ENCODE measurements at regions of chr21 and their contacts with region 1.

Region 1: DNA sequence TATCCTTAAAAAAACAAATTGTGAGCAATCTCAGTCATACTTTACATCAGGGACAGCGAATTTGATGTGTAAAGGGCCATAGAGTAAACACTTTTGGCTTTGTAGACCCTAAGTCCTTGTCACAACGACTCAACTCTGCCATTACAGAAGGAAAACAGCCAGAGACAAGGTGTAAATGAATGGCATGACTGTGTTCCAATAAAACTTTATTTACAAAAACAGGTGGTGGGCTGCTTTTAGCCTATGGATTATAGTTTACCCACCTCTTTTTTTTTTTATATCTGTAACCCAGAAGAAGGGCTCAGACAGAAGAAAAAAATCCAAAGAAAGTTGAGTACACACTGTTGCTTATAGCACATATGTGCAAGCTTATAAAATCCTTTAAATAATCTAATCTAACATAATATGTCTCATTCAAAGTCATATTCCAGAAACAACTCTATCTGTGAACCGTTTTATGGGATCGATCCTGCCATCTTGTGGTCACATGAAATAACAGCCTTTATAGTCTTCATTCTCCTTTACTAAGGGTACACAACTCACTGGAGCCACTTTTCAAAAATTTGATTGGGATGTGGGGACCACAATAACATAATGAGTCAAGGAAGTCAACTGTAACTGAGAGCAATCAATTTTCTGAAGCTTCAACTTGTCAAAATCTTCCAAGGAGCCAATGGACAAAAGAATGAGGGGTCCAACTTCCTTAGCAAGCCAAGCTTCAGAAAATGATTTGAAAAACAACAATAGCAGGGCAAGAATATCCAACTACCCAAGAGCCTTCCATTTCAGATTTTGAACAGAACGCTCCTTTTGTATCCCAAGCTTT is 142.2 kb upstream of the KRTAP19-8 start:
- DNase-seq: peak in 6 of 9 donors; percentile 33 to 65 (median 50)
- ATAC-seq: peak; percentile 30
- H3K4me3 ChIP-seq: peak overlapping the region; percentile 46
- H3K4me3 Mint-ChIP-seq: peak overlapping the region; percentile 82 to 100 (median 87)
- H3K27ac ChIP-seq: peak overlapping the region; percentile 79
- H3K27ac Mint-ChIP-seq: peak overlapping the region; percentile 96 to 100 (median 99)
- H3K4me1 ChIP-seq: peaks cover 12 to 73% of the 10 kb centered on the region in 2 donors
- H3K4me1 Mint-ChIP-seq: peaks cover 44 to 92% (median 72%) of the 10 kb centered on the region in 7 donors
- H3K27me3 ChIP-seq: no peaks in the 10 kb centered on the region
- H3K27me3 Mint-ChIP-seq: no peaks in the 10 kb centered on the region

Region 2: DNA sequence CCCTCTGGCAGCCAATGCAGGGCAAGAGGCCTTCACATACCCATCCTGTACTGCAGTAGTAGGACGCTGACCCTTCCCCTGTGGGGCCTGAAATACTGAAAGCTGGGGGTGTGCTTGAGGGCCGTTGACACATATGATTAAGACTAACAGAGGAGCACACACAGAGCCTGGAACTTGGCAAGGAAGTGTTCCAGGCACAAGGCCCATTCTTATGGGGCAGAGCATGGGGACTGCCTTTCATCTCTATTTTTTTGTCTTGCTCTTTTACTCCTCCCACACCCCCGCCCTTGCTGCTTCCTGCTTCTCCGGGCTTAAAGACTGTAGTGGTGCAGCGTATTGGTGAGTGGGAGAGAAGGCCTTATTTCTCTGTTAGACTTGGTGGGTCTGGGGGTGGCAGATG is 1744.3 kb before region 1 on chr21:
- CTCF ChIA-PET with region 1: no interaction called
- POLR2A ChIA-PET with region 1: no interaction called
- intact Hi-C with region 1: loop called in 1 of 2 experiments (anchors 10 kb)
- DNase-seq: peak in 8 of 9 donors; percentile 28 to 69 (median 54)
- ATAC-seq: peak; percentile 90
- H3K4me3 ChIP-seq: peak overlapping the region; percentile 41
- H3K4me3 Mint-ChIP-seq: peak overlapping the region; percentile 80 to 91 (median 88)
- H3K27ac ChIP-seq: peak overlapping the region; percentile 63
- H3K27ac Mint-ChIP-seq: peak overlapping the region; percentile 81 to 98 (median 94)
- H3K4me1 ChIP-seq: peaks cover 10 to 17% of the 10 kb centered on the region in 2 donors
- H3K4me1 Mint-ChIP-seq: peaks cover 12 to 55% (median 34%) of the 10 kb centered on the region in 7 donors
- H3K27me3 ChIP-seq: no peaks in the 10 kb centered on the region
- H3K27me3 Mint-ChIP-seq: no peaks in the 10 kb centered on the region

Region 3: GRCh38 chr21:31064803-31065202 is 115.7 kb before region 1 on chr21:
- CTCF ChIA-PET with region 1: no interaction called
- POLR2A ChIA-PET with region 1: no interaction called
- intact Hi-C with region 1: no loop called
- DNase-seq: no peak
- ATAC-seq: no peak
- H3K4me3 ChIP-seq: no peak overlapping the region
- H3K4me3 Mint-ChIP-seq: no peak overlapping the region
- H3K27ac ChIP-seq: no peak overlapping the region
- H3K27ac Mint-ChIP-seq: no peak overlapping the region
- H3K4me1 ChIP-seq: no peaks in the 10 kb centered on the region
- H3K4me1 Mint-ChIP-seq: peaks cover 0 to 6% (median 0%) of the 10 kb centered on the region in 7 donors
- H3K27me3 ChIP-seq: no peaks in the 10 kb centered on the region
- H3K27me3 Mint-ChIP-seq: peaks cover 0 to 17% (median 5%) of the 10 kb centered on the region in 5 donors

Region 4: DNA sequence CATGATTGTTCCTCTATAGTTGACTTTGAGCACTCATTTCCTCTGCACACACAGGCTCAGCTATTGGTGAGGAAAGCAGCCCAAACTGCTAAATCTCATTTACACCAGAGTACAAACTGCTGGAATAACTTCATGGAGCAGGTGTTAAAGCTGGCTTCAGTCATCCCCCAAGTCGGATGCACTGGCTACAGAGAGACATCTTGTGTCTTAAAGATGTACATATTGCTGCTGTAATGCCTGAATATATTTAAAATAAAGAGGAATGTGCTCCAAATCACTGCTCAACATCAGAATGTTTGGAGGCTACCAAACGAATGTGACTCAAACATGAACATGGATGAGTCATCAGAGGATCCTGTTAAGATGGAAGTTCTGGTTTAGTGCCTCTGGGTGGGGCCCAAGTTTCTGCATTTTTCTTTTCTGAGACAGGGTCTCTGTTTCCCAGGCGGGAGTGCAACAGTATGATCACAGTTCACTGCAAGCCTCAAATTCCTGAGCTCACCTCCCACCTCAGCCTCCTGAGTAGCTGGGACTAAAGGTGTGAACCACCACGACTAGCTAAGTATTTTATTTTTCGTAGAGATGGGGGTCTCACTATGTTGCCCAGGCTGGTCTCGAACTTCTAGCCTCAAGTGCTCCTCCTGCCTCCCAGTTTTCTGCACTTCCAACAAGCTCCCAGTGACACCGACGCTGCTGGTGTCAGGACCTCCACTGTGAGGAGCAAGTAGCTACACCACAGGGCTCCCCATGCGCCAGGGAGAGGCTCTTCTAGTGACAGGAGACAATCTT is 63.1 kb before region 1 on chr21:
- CTCF ChIA-PET with region 1: interaction called, 6 read pairs
- POLR2A ChIA-PET with region 1: interaction called, 8 read pairs
- intact Hi-C with region 1: loop called in 1 of 2 experiments (anchors 1 kb)
- DNase-seq: no peak
- ATAC-seq: peak; percentile 64
- H3K4me3 ChIP-seq: no peak overlapping the region
- H3K4me3 Mint-ChIP-seq: peak overlapping the region in 1 of 10 donors; percentile 3
- H3K27ac ChIP-seq: no peak overlapping the region
- H3K27ac Mint-ChIP-seq: peak overlapping the region in 7 of 9 donors; percentile 20 to 64 (median 56)
- H3K4me1 ChIP-seq: no peaks in the 10 kb centered on the region
- H3K4me1 Mint-ChIP-seq: peaks cover 0 to 29% (median 17%) of the 10 kb centered on the region in 7 donors
- H3K27me3 ChIP-seq: no peaks in the 10 kb centered on the region
- H3K27me3 Mint-ChIP-seq: no peaks in the 10 kb centered on the region

Region 5: GRCh38 chr21:31161157-31161556 is 19.3 kb before region 1 on chr21:
- CTCF ChIA-PET with region 1: interaction called, 106 read pairs
- POLR2A ChIA-PET with region 1: interaction called, 332 read pairs
- intact Hi-C with region 1: loop called (anchors 1 to 2 kb)
- DNase-seq: peak in 1 of 9 donors; percentile 35
- ATAC-seq: peak; percentile 28
- H3K4me3 ChIP-seq: no peak overlapping the region
- H3K4me3 Mint-ChIP-seq: peak overlapping the region; percentile 14 to 88 (median 77)
- H3K27ac ChIP-seq: peak overlapping the region; percentile 69
- H3K27ac Mint-ChIP-seq: peak overlapping the region; percentile 13 to 99 (median 95)
- H3K4me1 ChIP-seq: peaks cover 0 to 84% of the 10 kb centered on the region in 2 donors
- H3K4me1 Mint-ChIP-seq: peaks cover 52 to 94% (median 92%) of the 10 kb centered on the region in 7 donors
- H3K27me3 ChIP-seq: no peaks in the 10 kb centered on the region
- H3K27me3 Mint-ChIP-seq: no peaks in the 10 kb centered on the region

Region 6: DNA sequence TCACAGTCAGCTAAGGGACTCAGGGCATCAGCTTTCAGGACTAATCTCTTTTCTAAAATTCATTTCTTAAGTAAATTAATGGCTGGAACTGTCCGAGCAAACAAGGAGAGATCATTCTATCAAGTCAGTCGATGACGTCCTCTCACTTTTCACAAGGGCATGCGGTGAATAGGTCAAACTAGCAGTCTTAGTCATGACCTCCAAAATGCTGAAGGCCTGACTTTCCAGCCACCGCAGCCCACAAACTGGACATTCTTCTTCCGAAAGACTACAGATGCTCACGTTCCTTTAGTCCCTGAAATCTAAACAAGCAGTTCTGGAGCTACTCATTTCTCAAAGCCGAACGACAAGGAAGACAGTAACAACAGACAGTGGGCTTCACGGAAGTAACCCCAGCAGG is 35.7 kb after region 1 on chr21:
- CTCF ChIA-PET with region 1: no interaction called
- POLR2A ChIA-PET with region 1: no interaction called
- intact Hi-C with region 1: no loop called
- DNase-seq: no peak
- ATAC-seq: no peak
- H3K4me3 ChIP-seq: no peak overlapping the region
- H3K4me3 Mint-ChIP-seq: no peak overlapping the region
- H3K27ac ChIP-seq: no peak overlapping the region
- H3K27ac Mint-ChIP-seq: no peak overlapping the region
- H3K4me1 ChIP-seq: no peaks in the 10 kb centered on the region
- H3K4me1 Mint-ChIP-seq: peaks cover 0 to 10% (median 0%) of the 10 kb centered on the region in 7 donors
- H3K27me3 ChIP-seq: no peaks in the 10 kb centered on the region
- H3K27me3 Mint-ChIP-seq: no peaks in the 10 kb centered on the region

Region 7: DNA sequence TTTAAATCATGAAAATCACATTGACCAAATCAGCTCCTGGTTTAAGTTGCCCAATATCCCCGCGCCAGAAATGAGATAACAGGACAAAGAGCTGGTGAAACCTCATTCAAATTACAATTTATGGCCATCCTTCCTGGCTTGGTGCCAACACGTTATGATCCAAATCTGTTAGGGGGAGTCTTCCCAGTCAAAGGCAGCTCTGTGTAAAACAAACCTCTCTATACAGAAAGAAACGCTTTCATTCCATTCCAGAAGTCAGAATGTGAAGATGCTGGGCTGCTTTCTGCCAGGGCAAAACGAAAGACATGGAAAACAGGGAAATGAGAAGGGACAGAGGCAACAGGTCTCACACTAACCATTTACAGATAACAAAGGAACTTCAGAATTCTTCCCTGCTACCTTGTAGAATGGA is 217.1 kb after region 1 on chr21:
- CTCF ChIA-PET with region 1: no interaction called
- POLR2A ChIA-PET with region 1: no interaction called
- intact Hi-C with region 1: no loop called
- DNase-seq: no peak
- ATAC-seq: no peak
- H3K4me3 ChIP-seq: no peak overlapping the region
- H3K4me3 Mint-ChIP-seq: peak overlapping the region; percentile 40 to 84 (median 72)
- H3K27ac ChIP-seq: no peak overlapping the region
- H3K27ac Mint-ChIP-seq: peak overlapping the region; percentile 5 to 91 (median 61)
- H3K4me1 ChIP-seq: peaks cover 12 to 41% of the 10 kb centered on the region in 2 donors
- H3K4me1 Mint-ChIP-seq: peaks cover 20 to 77% (median 58%) of the 10 kb centered on the region in 7 donors
- H3K27me3 ChIP-seq: no peaks in the 10 kb centered on the region
- H3K27me3 Mint-ChIP-seq: no peaks in the 10 kb centered on the region

Region 8: DNA sequence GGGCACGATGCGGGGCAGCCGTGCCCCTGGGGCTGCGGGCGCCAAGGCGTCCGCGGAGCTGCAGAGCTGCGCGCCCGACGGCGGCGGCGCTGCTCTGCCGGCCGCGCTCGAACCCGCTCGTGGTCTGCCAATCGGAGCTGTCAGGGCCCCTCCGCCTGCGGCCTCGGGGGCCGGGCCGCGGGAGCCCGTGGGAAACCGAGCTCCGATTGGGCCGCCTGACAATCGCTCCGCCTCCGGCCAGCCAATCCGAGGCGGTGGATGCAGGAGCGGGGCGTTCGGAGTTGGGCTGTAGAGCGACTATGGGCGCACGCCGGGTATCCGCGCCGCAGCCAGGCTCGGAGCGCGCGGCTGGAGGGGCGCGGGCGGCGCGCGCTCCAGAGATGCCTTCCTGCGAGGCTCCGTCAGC is 378.5 kb after region 1 on chr21:
- CTCF ChIA-PET with region 1: interaction called, 5 read pairs
- POLR2A ChIA-PET with region 1: interaction called, 4 read pairs
- intact Hi-C with region 1: loop called (anchors 1 to 2 kb)
- DNase-seq: peak; percentile 85 to 96 (median 92)
- ATAC-seq: peak; percentile 94
- H3K4me3 ChIP-seq: peak overlapping the region; percentile 82
- H3K4me3 Mint-ChIP-seq: peak overlapping the region; percentile 87 to 98 (median 94)
- H3K27ac ChIP-seq: peak overlapping the region; percentile 52
- H3K27ac Mint-ChIP-seq: peak overlapping the region in 4 of 9 donors; percentile 45 to 75 (median 65)
- H3K4me1 ChIP-seq: peaks cover 3 to 5% of the 10 kb centered on the region in 2 donors
- H3K4me1 Mint-ChIP-seq: peaks cover 18 to 51% (median 34%) of the 10 kb centered on the region in 7 donors
- H3K27me3 ChIP-seq: no peaks in the 10 kb centered on the region
- H3K27me3 Mint-ChIP-seq: peaks cover 6 to 47% (median 25%) of the 10 kb centered on the region in 5 donors

Region 9: DNA sequence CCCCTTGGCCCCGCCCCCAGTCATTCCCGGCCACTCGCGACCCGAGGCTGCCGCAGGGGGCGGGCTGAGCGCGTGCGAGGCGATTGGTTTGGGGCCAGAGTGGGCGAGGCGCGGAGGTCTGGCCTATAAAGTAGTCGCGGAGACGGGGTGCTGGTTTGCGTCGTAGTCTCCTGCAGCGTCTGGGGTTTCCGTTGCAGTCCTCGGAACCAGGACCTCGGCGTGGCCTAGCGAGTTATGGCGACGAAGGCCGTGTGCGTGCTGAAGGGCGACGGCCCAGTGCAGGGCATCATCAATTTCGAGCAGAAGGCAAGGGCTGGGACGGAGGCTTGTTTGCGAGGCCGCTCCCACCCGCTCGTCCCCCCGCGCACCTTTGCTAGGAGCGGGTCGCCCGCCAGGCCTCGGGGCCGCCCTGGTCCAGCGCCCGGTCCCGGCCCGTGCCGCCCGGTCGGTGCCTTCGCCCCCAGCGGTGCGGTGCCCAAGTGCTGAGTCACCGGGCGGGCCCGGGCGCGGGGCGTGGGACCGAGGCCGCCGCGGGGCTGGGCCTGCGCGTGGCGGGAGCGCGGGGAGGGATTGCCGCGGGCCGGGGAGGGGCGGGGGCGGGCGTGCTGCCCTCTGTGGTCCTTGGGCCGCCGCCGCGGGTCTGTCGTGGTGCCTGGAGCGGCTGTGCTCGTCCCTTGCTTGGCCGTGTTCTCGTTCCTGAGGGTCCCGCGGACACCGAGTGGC is 479.2 kb after region 1 on chr21 and contains the start of gene SOD1:
- CTCF ChIA-PET with region 1: no interaction called
- POLR2A ChIA-PET with region 1: no interaction called
- intact Hi-C with region 1: loop called (anchors 1 to 5 kb)
- DNase-seq: peak in 8 of 9 donors; percentile 20 to 98 (median 97)
- ATAC-seq: peak; percentile 97
- H3K4me3 ChIP-seq: peak within 1 kb of the TSS; percentile 79
- H3K4me3 Mint-ChIP-seq: peak within 1 kb of the TSS; percentile 95 to 100 (median 100)
- H3K27ac ChIP-seq: peak within 1 kb of the TSS; percentile 88
- H3K27ac Mint-ChIP-seq: peak within 1 kb of the TSS; percentile 97 to 100 (median 98)
- H3K4me1 ChIP-seq: peaks cover 15 to 50% of the 10 kb centered on the region in 2 donors
- H3K4me1 Mint-ChIP-seq: peaks cover 40 to 80% (median 68%) of the 10 kb centered on the region in 7 donors
- H3K27me3 ChIP-seq: no peaks in the 10 kb centered on the region
- H3K27me3 Mint-ChIP-seq: no peaks in the 10 kb centered on the region
- total RNA-seq, gene SOD1: 110 to 218 (median 182) TPM

Measured in naive thymus-derived CD4-positive, alpha-beta T cell (primary cell).